ENCODE measurements at regions of chr15 and their contacts with region 1.

Region 1: GRCh38 chr15:73633111-73633990 is at the start of gene NPTN:
- DNase-seq: peak; percentile 93
- H3K4me3 ChIP-seq: peak within 1 kb of the TSS; percentile 64
- H3K27ac ChIP-seq: peak within 1 kb of the TSS; percentile 91
- H3K27me3 ChIP-seq: peaks cover 2% of the 10 kb centered on the region
- CTCF ChIP-seq: peak; percentile 16; the same call in 1 of the 2 replicates
- polyA plus RNA-seq, gene NPTN: 195 and 197 TPM in 2 replicates

Region 2: DNA sequence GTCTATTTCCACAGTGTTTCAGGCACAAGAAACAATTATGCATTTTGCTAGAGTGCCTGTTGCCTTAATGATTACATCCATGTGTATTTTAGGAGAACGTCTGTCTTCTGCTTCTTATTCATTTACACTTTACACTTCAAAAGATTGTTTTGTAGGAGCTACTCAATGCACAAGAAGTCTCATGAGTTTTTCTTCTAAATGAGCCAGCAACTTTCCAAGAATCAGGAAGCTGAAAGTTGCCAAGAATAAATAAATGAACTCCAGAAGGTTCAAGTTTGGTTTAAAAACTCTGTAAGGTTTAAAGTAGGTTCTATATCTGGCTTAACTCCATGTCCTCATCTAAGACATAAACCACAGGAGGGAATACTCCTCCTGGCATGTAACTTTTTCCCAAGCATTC is 746.0 kb before region 1 on chr15:
- CTCF ChIA-PET with region 1: no interaction called
- POLR2A ChIA-PET with region 1: no interaction called
- DNase-seq: no peak
- H3K4me3 ChIP-seq: no peak overlapping the region
- H3K27ac ChIP-seq: no peak overlapping the region
- H3K27me3 ChIP-seq: peaks cover 3% of the 10 kb centered on the region
- CTCF ChIP-seq: no peak

Region 3: DNA sequence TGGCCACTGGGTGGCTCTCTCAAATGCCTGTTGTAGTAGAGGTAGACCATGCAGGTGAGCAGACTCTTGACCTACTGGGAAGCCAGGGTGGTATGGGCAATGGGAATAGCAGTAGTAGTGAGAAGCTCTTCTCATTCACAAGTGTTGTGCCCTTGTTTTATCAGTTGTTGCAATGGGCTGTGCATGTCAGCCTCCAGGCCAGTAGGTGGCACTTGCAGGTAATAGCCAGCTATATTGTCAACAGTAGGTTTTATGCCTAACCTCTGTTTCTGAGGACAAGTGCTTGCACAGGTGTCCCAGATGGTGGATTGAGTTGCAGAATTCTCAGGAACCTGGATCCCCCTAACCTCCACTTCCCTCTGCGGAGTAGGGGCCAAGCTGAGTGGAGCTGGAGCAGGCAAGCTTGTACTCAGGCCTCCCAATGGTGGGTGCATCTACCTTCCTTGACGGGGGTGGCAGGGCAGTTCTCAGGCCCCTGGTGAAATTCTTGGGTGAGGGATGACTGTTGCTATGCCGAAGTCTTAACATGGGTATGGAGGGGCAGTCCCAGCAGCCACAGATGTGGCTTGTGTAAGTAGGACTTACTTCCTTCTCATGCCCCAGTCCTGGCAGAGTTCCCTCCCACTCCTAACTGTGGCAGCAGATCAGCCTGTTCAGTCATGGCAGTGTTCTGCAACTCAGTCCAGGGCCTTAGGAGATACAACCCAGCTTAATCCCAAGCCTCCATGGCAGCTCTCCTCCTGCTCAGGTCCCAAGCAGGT is 476.7 kb before region 1 on chr15:
- CTCF ChIA-PET with region 1: no interaction called
- POLR2A ChIA-PET with region 1: no interaction called
- DNase-seq: no peak
- H3K4me3 ChIP-seq: no peak overlapping the region
- H3K27ac ChIP-seq: no peak overlapping the region
- H3K27me3 ChIP-seq: no peaks in the 10 kb centered on the region
- CTCF ChIP-seq: no peak

Region 4: DNA sequence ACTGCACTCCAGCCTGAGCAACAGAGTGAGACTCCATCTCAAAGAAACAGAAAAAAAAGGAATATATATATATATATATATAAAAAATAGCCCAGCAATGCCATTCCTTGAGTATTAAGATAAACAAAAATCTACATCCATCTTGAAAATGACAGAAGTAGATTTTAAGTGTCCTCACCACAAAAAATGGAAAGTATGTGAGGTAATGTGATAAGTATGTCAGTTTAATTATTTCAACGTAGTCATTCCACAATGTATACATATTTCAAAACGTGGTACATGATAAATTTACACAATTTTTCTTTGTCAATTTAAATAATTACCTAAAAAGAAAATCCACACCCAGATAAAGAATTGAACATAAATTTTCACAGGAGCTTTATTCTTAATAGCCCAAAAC is 319.5 kb before region 1 on chr15:
- CTCF ChIA-PET with region 1: interaction called, 15 read pairs
- POLR2A ChIA-PET with region 1: no interaction called
- DNase-seq: no peak
- H3K4me3 ChIP-seq: no peak overlapping the region
- H3K27ac ChIP-seq: no peak overlapping the region
- H3K27me3 ChIP-seq: peaks cover 6% of the 10 kb centered on the region
- CTCF ChIP-seq: no peak

Region 5: DNA sequence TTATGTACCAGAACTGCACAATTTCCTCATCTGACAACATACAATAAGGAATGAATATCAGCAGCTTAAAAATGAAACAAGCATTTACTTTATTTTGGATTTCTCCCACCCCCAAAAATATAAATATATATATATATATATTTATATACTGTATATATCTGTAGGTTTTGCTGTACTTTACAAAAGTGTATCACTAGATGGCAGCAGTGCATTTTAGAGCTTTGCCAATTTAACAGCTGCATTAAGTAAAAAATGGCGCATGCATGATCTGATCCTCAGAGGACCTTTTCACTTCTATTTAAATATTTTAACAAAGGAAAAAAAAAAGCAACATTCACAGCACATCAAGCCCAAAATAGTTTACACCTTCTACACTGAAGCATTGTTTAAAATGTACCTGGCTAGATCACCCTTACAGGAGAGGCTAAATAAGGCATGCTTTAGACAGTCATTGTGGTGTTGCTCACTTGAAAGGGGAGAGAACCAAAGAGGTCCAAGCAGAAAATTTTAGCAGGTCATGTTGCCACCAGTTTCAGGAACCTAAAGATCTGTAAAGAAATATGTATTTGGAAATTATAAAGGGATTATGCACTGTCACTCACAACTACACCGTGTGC is 72.7 kb before region 1 on chr15:
- CTCF ChIA-PET with region 1: interaction called, 255 read pairs
- POLR2A ChIA-PET with region 1: no interaction called
- DNase-seq: peak; percentile 55
- H3K4me3 ChIP-seq: no peak overlapping the region
- H3K27ac ChIP-seq: no peak overlapping the region
- H3K27me3 ChIP-seq: no peaks in the 10 kb centered on the region
- CTCF ChIP-seq: peak; percentile 61

Region 6: GRCh38 chr15:73601451-73602445 is 31.6 kb before region 1 on chr15:
- CTCF ChIA-PET with region 1: interaction called, 69 read pairs
- POLR2A ChIA-PET with region 1: interaction called, 8 read pairs
- DNase-seq: no peak
- H3K4me3 ChIP-seq: peak overlapping the region; percentile 12; the same call in 1 of the 2 replicates
- H3K27ac ChIP-seq: peak overlapping the region; percentile 53
- H3K27me3 ChIP-seq: no peaks in the 10 kb centered on the region
- CTCF ChIP-seq: no peak

Region 7: GRCh38 chr15:73660455-73660854 is 27.1 kb after region 1 on chr15:
- CTCF ChIA-PET with region 1: interaction called, 24 read pairs
- POLR2A ChIA-PET with region 1: no interaction called
- DNase-seq: no peak
- H3K4me3 ChIP-seq: no peak overlapping the region
- H3K27ac ChIP-seq: no peak overlapping the region
- H3K27me3 ChIP-seq: peaks cover 19% of the 10 kb centered on the region
- CTCF ChIP-seq: no peak

Region 8: DNA sequence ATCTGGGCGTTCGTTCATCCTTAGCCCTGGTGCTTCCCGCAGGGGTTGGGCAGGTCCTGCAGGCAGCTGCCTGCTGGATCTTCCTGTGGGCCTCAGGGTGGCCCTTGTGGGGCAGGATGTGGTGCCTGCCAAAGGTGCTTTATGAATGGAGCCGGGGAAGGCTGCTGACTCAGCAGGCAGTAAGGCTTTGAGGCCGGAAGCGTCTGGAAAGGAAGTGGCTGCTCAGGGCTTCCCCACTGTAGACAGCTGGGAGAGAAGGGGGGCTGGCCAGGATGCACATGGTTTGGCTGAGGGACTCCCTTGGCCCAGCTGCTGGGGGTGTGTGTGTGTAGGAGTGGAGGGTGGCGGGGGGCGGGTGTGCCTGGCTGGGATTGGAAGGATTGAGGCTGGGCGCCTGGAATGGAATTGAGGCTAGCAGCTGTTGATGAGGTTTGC is 63.7 kb after region 1 on chr15:
- CTCF ChIA-PET with region 1: interaction called, 304 read pairs
- POLR2A ChIA-PET with region 1: interaction called, 21 read pairs
- DNase-seq: peak; percentile 81
- H3K4me3 ChIP-seq: no peak overlapping the region
- H3K27ac ChIP-seq: peak overlapping the region; percentile 80
- H3K27me3 ChIP-seq: no peaks in the 10 kb centered on the region
- CTCF ChIP-seq: no peak